MCF 10A (cell line): ENCODE measurements at regions of chr18 and their contacts with region 1.

Region 1: GRCh38 chr18:31555971-31556747 is 35.5 kb upstream of the TTR start:
- DNase-seq: peak; percentile 77
- H3K4me3 Mint-ChIP-seq: no peak overlapping the region
- H3K27ac Mint-ChIP-seq: no peak overlapping the region
- H3K4me1 Mint-ChIP-seq: peaks cover 6% of the 10 kb centered on the region
- H3K27me3 Mint-ChIP-seq: no peaks in the 10 kb centered on the region
- CTCF ChIP-seq: peak; percentile 76

Region 2: DNA sequence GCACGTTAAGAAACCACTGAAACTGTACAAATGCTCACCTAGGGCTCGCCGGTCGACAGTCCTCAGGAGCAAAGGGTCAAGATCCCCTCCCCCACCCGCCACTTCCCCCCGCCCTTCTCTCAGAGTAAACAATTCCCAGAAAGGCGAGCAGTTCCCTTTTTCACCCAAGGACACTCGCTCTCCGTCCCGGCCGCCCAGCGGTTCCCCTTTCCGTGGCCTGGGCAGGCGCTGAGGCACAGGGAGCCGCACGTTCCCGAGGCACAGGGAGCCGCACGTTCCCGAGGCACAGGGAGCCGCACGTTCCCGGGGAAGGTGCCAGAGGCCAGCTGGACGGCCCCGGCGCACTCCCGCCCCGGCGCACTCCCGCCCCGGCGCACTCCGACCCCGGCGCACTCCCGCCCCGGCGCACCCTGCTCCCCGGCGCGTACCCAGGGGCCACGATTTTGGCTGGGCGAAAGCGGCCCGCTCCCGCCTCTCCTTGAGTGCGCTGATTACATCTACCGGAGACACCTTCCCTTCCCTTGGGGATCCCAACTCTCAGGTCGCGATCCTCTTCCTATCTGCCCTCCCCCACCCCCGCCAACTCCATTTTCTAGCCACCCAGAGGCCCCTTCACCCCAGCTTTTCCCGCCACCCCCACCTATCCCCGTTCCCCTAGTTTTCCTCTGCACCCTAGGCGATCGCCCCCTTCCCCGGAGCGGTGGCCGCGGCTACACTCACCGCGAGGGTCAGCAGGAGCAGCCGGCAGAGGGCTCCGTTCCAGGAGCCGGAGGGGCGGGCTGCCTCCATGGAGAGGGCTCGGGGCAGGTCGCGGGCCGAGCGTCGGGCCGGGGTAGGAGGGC is 454.8 kb before region 1 on chr18:
- CTCF ChIA-PET with region 1: no interaction called
- POLR2A ChIA-PET with region 1: no interaction called
- intact Hi-C with region 1: no loop called
- DNase-seq: peak; percentile 53
- H3K4me3 Mint-ChIP-seq: peak overlapping the region; percentile 82
- H3K27ac Mint-ChIP-seq: peak overlapping the region; percentile 81
- H3K4me1 Mint-ChIP-seq: peaks cover 30% of the 10 kb centered on the region
- H3K27me3 Mint-ChIP-seq: no peaks in the 10 kb centered on the region
- CTCF ChIP-seq: no peak

Region 3: GRCh38 chr18:31574359-31574758 is 18.2 kb after region 1 on chr18:
- CTCF ChIA-PET with region 1: interaction called, 12 read pairs
- POLR2A ChIA-PET with region 1: no interaction called
- intact Hi-C with region 1: no loop called
- DNase-seq: no peak
- H3K4me3 Mint-ChIP-seq: no peak overlapping the region
- H3K27ac Mint-ChIP-seq: no peak overlapping the region
- H3K4me1 Mint-ChIP-seq: no peaks in the 10 kb centered on the region
- H3K27me3 Mint-ChIP-seq: no peaks in the 10 kb centered on the region
- CTCF ChIP-seq: no peak

Region 4: GRCh38 chr18:31741097-31741735 is 185.1 kb after region 1 on chr18:
- CTCF ChIA-PET with region 1: interaction called, 3 read pairs
- POLR2A ChIA-PET with region 1: no interaction called
- intact Hi-C with region 1: loop called (anchors 1 kb)
- DNase-seq: peak; percentile 59
- H3K4me3 Mint-ChIP-seq: no peak overlapping the region
- H3K27ac Mint-ChIP-seq: no peak overlapping the region
- H3K4me1 Mint-ChIP-seq: no peaks in the 10 kb centered on the region
- H3K27me3 Mint-ChIP-seq: no peaks in the 10 kb centered on the region
- CTCF ChIP-seq: peak; percentile 81

Region 5: DNA sequence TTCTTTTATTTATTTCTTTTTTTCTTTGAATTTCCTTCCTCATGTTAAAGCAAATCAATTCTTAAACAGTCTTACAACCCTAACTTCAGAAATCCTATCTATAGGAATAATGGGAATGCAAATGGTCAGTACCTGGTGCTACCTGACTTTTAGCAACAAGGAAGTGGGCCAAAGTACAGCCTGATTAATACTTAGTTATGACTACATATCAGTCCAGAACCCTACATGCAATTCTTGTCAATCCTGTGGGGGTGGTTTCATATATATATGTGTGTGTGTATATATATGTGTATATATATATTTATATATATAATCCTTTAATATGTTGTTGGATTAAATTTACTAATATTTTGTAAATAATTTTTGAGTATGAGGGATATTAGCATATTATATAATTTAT is 401.6 kb after region 1 on chr18:
- CTCF ChIA-PET with region 1: interaction called, 4 read pairs
- POLR2A ChIA-PET with region 1: no interaction called
- intact Hi-C with region 1: loop called (anchors 2 kb)
- DNase-seq: no peak
- H3K4me3 Mint-ChIP-seq: no peak overlapping the region
- H3K27ac Mint-ChIP-seq: no peak overlapping the region
- H3K4me1 Mint-ChIP-seq: peaks cover 5% of the 10 kb centered on the region
- H3K27me3 Mint-ChIP-seq: no peaks in the 10 kb centered on the region
- CTCF ChIP-seq: no peak